ENCODE measurements at regions of chr4 and their contacts with region 1.

Region 1: GRCh38 chr4:48681856-48682255 is 98.2 kb downstream of the FRYL start:
- DNase-seq: peak in 6 of 9 donors; percentile 4 to 43 (median 25)
- ATAC-seq: peak; percentile 70
- H3K4me3 ChIP-seq: no peak overlapping the region
- H3K4me3 Mint-ChIP-seq: peak overlapping the region in 1 of 10 donors; percentile 26
- H3K27ac ChIP-seq: no peak overlapping the region
- H3K27ac Mint-ChIP-seq: peak overlapping the region in 7 of 9 donors; percentile 35 to 86 (median 69)
- H3K4me1 ChIP-seq: peaks cover 4 to 9% of the 10 kb centered on the region in 2 donors
- H3K4me1 Mint-ChIP-seq: peaks cover 22 to 52% (median 45%) of the 10 kb centered on the region in 7 donors
- H3K27me3 ChIP-seq: no peaks in the 10 kb centered on the region
- H3K27me3 Mint-ChIP-seq: no peaks in the 10 kb centered on the region

Region 2: GRCh38 chr4:48578132-48578968 is 103.5 kb before region 1 on chr4:
- CTCF ChIA-PET with region 1: interaction called, 12 read pairs
- POLR2A ChIA-PET with region 1: no interaction called
- intact Hi-C with region 1: loop called (anchors 1 to 2 kb)
- DNase-seq: peak in 8 of 9 donors; percentile 29 to 66 (median 50)
- ATAC-seq: peak; percentile 95
- H3K4me3 ChIP-seq: no peak overlapping the region
- H3K4me3 Mint-ChIP-seq: no peak overlapping the region
- H3K27ac ChIP-seq: no peak overlapping the region
- H3K27ac Mint-ChIP-seq: peak overlapping the region in 6 of 9 donors; percentile 28 to 79 (median 52)
- H3K4me1 ChIP-seq: no peaks in the 10 kb centered on the region
- H3K4me1 Mint-ChIP-seq: peaks cover 0 to 7% (median 0%) of the 10 kb centered on the region in 7 donors
- H3K27me3 ChIP-seq: no peaks in the 10 kb centered on the region
- H3K27me3 Mint-ChIP-seq: no peaks in the 10 kb centered on the region

Region 3: DNA sequence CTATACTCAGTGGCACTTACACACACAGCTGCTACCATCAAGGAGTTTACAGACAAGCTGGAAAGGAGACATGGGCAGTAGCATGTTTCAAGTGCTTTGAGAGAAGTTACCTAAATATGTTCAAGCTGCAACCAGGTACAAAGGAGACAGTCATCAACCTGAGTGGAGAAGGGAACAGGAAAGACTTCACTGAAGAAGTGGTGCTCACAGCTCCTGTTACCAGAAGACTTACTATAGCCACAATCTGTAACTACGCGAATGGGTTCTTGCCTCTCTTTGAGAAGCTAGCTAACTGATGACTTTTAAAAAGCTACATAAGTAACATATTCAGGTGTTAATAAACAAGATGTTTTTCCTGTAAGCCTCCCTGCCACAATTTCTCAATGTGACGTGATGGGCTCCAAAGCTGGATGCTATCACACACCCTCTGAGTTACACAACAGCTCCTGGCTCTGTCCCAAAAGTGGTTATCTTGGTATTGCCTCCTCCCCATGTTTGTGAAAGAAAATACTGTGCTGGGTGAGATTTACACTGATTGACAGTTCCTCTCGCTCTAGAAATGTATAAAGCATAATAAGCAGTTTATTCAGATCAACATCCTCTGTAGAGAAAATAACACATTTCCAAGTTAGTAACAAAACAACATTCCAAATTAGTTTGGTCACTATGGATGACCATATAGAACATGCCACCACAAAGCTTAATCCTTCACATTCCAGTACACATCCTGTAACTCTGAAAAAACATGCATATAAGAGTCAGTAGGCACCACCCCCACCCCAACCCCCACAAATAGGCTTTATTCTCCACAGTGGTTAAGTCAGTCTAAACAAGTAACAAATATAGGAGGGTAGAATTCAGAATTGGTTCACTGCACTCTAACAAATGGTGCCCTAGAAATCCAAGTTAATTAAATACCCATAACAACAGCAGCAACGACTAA is 16.4 kb after region 1 on chr4:
- CTCF ChIA-PET with region 1: interaction called, 3 read pairs
- POLR2A ChIA-PET with region 1: no interaction called
- intact Hi-C with region 1: loop called in 1 of 2 experiments (anchors 2 kb)
- DNase-seq: peak in 1 of 9 donors; percentile 11
- ATAC-seq: peak; percentile 41
- H3K4me3 ChIP-seq: no peak overlapping the region
- H3K4me3 Mint-ChIP-seq: peak overlapping the region in 3 of 10 donors; percentile 3 to 15 (median 9)
- H3K27ac ChIP-seq: no peak overlapping the region
- H3K27ac Mint-ChIP-seq: peak overlapping the region in 8 of 9 donors; percentile 10 to 61 (median 25)
- H3K4me1 ChIP-seq: peaks cover 16 to 19% of the 10 kb centered on the region in 2 donors
- H3K4me1 Mint-ChIP-seq: peaks cover 27 to 88% (median 77%) of the 10 kb centered on the region in 7 donors
- H3K27me3 ChIP-seq: no peaks in the 10 kb centered on the region
- H3K27me3 Mint-ChIP-seq: no peaks in the 10 kb centered on the region

Measured in naive thymus-derived CD4-positive, alpha-beta T cell (primary cell).